Caco-2 (cell line): ENCODE measurements at regions of chr11 and their contacts with region 1.

Region 1: GRCh38 chr11:28596816-28597215 is 488.6 kb downstream of the METTL15 start:
- DNase-seq: no peak
- H3K4me3 ChIP-seq: no peak overlapping the region
- H3K4me3 Mint-ChIP-seq: no peak overlapping the region
- H3K27ac Mint-ChIP-seq: peak overlapping the region; percentile 35
- H3K4me1 ChIP-seq: peaks cover 60% of the 10 kb centered on the region
- H3K4me1 Mint-ChIP-seq: peaks cover 26% of the 10 kb centered on the region
- H3K27me3 ChIP-seq: no peaks in the 10 kb centered on the region
- H3K27me3 Mint-ChIP-seq: no peaks in the 10 kb centered on the region
- CTCF ChIP-seq: no peak

Region 2: DNA sequence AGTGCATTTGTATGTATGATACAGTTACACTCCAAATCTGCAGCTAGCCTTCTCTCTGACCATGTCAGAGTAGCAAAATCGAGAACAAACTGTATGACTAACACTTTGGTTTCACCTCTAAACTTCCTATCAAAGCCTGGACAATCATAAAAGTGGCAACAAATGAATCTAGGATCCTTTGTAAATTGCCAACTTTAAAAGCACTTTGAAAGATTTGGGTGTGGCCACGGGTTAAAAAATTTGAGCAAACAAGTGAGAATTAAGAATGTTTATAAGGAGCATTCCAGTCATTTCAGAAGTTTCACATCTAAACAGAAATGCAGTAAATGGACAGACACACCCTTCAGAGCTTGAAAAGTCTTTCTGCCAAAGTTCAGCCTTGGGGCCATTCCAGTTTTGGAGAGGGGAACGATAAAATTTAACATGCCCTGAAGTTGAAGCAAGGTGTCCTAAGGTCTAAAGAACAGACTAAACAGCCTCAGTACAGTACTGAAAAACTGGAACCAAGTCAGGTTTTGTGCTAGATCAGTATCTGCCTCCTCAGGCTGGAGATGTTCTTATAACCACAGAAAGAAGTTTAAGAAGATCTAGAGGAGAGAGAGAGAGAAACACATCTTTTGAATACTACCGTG is 714.6 kb before region 1 on chr11:
- CTCF ChIA-PET with region 1: no interaction called
- POLR2A ChIA-PET with region 1: no interaction called
- intact Hi-C with region 1: loop called (anchors 10 kb)
- DNase-seq: peak; percentile 59 to 62
- H3K4me3 ChIP-seq: no peak overlapping the region
- H3K4me3 Mint-ChIP-seq: peak overlapping the region; percentile 20
- H3K27ac Mint-ChIP-seq: peak overlapping the region; percentile 84
- H3K4me1 ChIP-seq: peaks cover 36% of the 10 kb centered on the region
- H3K4me1 Mint-ChIP-seq: peaks cover 21% of the 10 kb centered on the region
- H3K27me3 ChIP-seq: no peaks in the 10 kb centered on the region
- H3K27me3 Mint-ChIP-seq: no peaks in the 10 kb centered on the region
- CTCF ChIP-seq: no peak

Region 3: GRCh38 chr11:28476049-28476448 is 120.8 kb before region 1 on chr11:
- CTCF ChIA-PET with region 1: no interaction called
- POLR2A ChIA-PET with region 1: no interaction called
- intact Hi-C with region 1: no loop called
- DNase-seq: no peak
- H3K4me3 ChIP-seq: no peak overlapping the region
- H3K4me3 Mint-ChIP-seq: no peak overlapping the region
- H3K27ac Mint-ChIP-seq: no peak overlapping the region
- H3K4me1 ChIP-seq: no peaks in the 10 kb centered on the region
- H3K4me1 Mint-ChIP-seq: no peaks in the 10 kb centered on the region
- H3K27me3 ChIP-seq: no peaks in the 10 kb centered on the region
- H3K27me3 Mint-ChIP-seq: no peaks in the 10 kb centered on the region
- CTCF ChIP-seq: no peak

Region 4: DNA sequence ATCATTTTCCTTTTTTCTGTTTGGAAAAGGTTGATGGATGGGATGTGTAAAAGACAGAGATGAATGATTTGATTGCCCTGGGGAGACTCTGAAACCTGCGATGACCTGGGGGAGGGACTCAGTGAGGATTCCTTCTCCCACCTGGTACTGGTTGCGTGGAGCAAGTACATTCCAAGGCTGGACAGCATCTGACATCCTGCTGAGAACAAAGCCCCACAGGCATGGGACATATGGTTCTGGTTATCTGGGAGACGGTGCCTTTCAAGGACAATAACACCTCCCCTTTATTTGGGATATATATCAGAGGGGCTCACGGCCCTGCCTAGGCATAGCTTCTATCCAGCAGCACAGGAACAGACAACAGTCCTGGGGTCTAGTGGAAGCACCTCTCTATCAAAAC is 39.2 kb after region 1 on chr11:
- CTCF ChIA-PET with region 1: no interaction called
- POLR2A ChIA-PET with region 1: no interaction called
- intact Hi-C with region 1: loop called (anchors 1 kb)
- DNase-seq: peak; percentile 15 to 48
- H3K4me3 ChIP-seq: no peak overlapping the region
- H3K4me3 Mint-ChIP-seq: no peak overlapping the region
- H3K27ac Mint-ChIP-seq: no peak overlapping the region
- H3K4me1 ChIP-seq: peaks cover 14% of the 10 kb centered on the region; the same call in 1 of the 2 replicates
- H3K4me1 Mint-ChIP-seq: peaks cover 14% of the 10 kb centered on the region
- H3K27me3 ChIP-seq: no peaks in the 10 kb centered on the region
- H3K27me3 Mint-ChIP-seq: no peaks in the 10 kb centered on the region
- CTCF ChIP-seq: no peak

Region 5: GRCh38 chr11:28657128-28658030 is 60.6 kb after region 1 on chr11:
- CTCF ChIA-PET with region 1: no interaction called
- POLR2A ChIA-PET with region 1: no interaction called
- intact Hi-C with region 1: loop called (anchors 2 kb)
- DNase-seq: peak in 1 of 2 experiments; percentile 24
- H3K4me3 ChIP-seq: no peak overlapping the region
- H3K4me3 Mint-ChIP-seq: peak overlapping the region; percentile 9
- H3K27ac Mint-ChIP-seq: peak overlapping the region; percentile 40
- H3K4me1 ChIP-seq: peaks cover 41% of the 10 kb centered on the region
- H3K4me1 Mint-ChIP-seq: peaks cover 17% of the 10 kb centered on the region
- H3K27me3 ChIP-seq: no peaks in the 10 kb centered on the region
- H3K27me3 Mint-ChIP-seq: no peaks in the 10 kb centered on the region
- CTCF ChIP-seq: no peak

Region 6: GRCh38 chr11:28666632-28667031 is 69.8 kb after region 1 on chr11:
- CTCF ChIA-PET with region 1: no interaction called
- POLR2A ChIA-PET with region 1: no interaction called
- intact Hi-C with region 1: loop called (anchors 1 kb)
- DNase-seq: no peak
- H3K4me3 ChIP-seq: no peak overlapping the region
- H3K4me3 Mint-ChIP-seq: no peak overlapping the region
- H3K27ac Mint-ChIP-seq: no peak overlapping the region
- H3K4me1 ChIP-seq: peaks cover 19% of the 10 kb centered on the region
- H3K4me1 Mint-ChIP-seq: peaks cover 15% of the 10 kb centered on the region
- H3K27me3 ChIP-seq: no peaks in the 10 kb centered on the region
- H3K27me3 Mint-ChIP-seq: no peaks in the 10 kb centered on the region
- CTCF ChIP-seq: no peak

Region 7: GRCh38 chr11:28697920-28698827 is 101.4 kb after region 1 on chr11:
- CTCF ChIA-PET with region 1: no interaction called
- POLR2A ChIA-PET with region 1: no interaction called
- intact Hi-C with region 1: loop called (anchors 2 kb)
- DNase-seq: peak; percentile 63 to 77
- H3K4me3 ChIP-seq: no peak overlapping the region
- H3K4me3 Mint-ChIP-seq: no peak overlapping the region
- H3K27ac Mint-ChIP-seq: peak overlapping the region; percentile 7
- H3K4me1 ChIP-seq: peaks cover 3% of the 10 kb centered on the region; the same call in 1 of the 2 replicates
- H3K4me1 Mint-ChIP-seq: peaks cover 23% of the 10 kb centered on the region
- H3K27me3 ChIP-seq: no peaks in the 10 kb centered on the region
- H3K27me3 Mint-ChIP-seq: no peaks in the 10 kb centered on the region
- CTCF ChIP-seq: peak; percentile 84 to 90

Region 8: GRCh38 chr11:28836285-28837081 is 239.7 kb after region 1 on chr11:
- CTCF ChIA-PET with region 1: no interaction called
- POLR2A ChIA-PET with region 1: no interaction called
- intact Hi-C with region 1: loop called (anchors 1 kb)
- DNase-seq: peak; percentile 34 to 46
- H3K4me3 ChIP-seq: no peak overlapping the region
- H3K4me3 Mint-ChIP-seq: peak overlapping the region; percentile 61
- H3K27ac Mint-ChIP-seq: peak overlapping the region; percentile 93
- H3K4me1 ChIP-seq: peaks cover 33% of the 10 kb centered on the region
- H3K4me1 Mint-ChIP-seq: peaks cover 23% of the 10 kb centered on the region
- H3K27me3 ChIP-seq: no peaks in the 10 kb centered on the region
- H3K27me3 Mint-ChIP-seq: no peaks in the 10 kb centered on the region
- CTCF ChIP-seq: no peak